ENCODE measurements at regions of chr10 and their contacts with region 1.

Region 1: DNA sequence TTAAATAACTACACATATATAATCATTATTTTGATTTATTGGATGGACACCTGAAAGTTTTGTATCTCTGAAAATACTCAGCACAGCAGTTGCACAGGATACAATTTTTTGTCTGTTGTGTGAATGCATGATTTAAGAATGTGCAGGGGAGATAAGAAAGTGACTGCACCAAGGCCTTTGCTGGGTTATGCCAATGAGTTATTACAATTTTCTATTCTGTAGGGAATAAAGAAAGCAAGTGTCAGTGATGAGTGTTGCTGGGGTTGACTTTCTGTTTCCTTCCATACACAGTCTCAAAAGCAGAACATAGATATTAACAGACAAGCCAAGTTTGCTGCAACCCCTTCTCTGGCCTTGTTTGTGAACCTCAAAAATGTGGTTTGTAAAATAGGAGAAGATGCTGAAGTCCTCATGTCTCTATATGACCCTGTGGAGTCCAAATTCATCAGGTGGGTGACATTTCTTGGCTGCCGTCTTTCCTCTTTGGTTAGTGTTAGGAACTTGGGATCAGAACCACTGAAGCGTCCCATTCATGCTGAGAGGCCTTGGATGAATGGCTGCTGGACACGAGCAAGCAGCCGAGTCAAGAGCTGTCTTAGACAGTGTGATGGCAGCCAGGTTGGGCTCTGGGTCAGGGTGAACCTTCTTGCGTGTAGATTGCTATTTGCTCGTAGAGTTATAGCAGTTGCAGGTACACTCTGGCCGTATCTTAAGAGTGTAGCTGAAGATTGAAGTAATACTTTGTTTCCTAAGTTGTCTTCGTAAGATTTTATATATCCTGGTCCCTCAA is 92.8 kb downstream of the DOCK1 start:
- DNase-seq: no peak
- ATAC-seq: no peak
- H3K4me3 ChIP-seq: no peak overlapping the region
- H3K27ac ChIP-seq: no peak overlapping the region
- H3K4me1 ChIP-seq: no peaks in the 10 kb centered on the region
- H3K27me3 ChIP-seq: no peaks in the 10 kb centered on the region
- CTCF ChIP-seq: no peak

Region 2: GRCh38 chr10:126397640-126398382 is 600.2 kb before region 1 on chr10:
- CTCF ChIA-PET with region 1: interaction called, 11 read pairs
- POLR2A ChIA-PET with region 1: no interaction called
- in situ Hi-C with region 1: no loop called
- intact Hi-C with region 1: no loop called
- DNase-seq: peak; percentile 90
- ATAC-seq: peak; percentile 96
- H3K4me3 ChIP-seq: no peak overlapping the region
- H3K27ac ChIP-seq: no peak overlapping the region
- H3K4me1 ChIP-seq: no peaks in the 10 kb centered on the region
- H3K27me3 ChIP-seq: no peaks in the 10 kb centered on the region
- CTCF ChIP-seq: no peak

Region 3: DNA sequence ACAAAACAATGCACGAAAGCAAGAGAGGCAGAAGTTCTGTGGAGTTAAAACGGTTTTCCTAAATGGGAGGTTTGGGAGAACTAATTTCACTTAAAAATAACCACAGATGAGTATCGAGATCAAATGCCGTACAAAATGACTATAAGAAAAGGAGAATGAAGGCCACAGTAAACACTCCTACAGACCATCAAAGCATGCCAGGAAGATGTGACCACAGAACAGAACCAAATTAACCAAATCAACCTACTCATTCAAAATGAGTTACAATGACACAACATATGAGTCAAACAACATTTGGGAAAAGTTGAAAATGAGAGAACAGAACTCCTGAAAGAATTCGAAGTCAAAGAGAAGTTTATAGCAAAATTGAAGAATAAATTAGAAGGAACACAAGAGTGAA is 117.1 kb before region 1 on chr10:
- CTCF ChIA-PET with region 1: no interaction called
- POLR2A ChIA-PET with region 1: no interaction called
- in situ Hi-C with region 1: no loop called
- intact Hi-C with region 1: no loop called
- DNase-seq: no peak
- ATAC-seq: no peak
- H3K4me3 ChIP-seq: no peak overlapping the region
- H3K27ac ChIP-seq: no peak overlapping the region
- H3K4me1 ChIP-seq: no peaks in the 10 kb centered on the region
- H3K27me3 ChIP-seq: peaks cover 13% of the 10 kb centered on the region
- CTCF ChIP-seq: no peak

Region 4: DNA sequence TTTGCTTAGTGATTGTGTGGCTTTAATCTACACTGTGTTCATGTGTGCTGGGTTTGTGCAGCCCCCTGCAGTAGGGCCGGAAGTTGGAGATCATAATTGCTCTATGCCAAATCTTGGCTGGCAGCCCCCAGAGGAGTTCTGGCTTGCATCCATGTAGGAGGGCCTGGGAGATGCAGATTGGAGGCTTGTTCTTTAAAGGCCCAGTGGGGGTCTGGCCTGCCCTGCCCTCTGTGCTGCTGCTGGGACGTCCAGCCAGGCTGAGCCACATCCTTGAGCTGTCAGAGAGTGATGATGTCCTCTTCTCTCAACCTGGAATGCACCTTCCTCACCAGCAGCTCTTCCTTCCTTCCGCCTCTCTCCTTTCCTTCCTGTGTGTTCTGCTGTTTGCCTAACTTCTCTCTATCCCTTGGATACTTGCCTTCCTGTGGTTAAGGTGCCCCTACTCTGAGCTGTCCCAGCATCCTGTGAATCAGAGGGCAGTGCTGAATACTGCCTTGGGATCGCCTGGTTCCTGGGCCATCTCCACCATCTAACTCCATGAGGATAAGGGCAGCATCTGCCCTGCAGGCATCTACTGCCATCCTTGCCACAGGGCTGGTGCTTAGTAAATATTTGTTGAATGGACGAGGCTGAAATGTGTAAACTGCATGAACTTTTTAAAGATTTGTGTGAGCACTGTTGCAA is 62.6 kb before region 1 on chr10:
- CTCF ChIA-PET with region 1: no interaction called
- POLR2A ChIA-PET with region 1: interaction called, 12 read pairs
- in situ Hi-C with region 1: no loop called
- intact Hi-C with region 1: no loop called
- DNase-seq: no peak
- ATAC-seq: peak; percentile 54; the same call in 1 of the 2 replicates
- H3K4me3 ChIP-seq: no peak overlapping the region
- H3K27ac ChIP-seq: no peak overlapping the region
- H3K4me1 ChIP-seq: peaks cover 4% of the 10 kb centered on the region; the same call in 1 of the 2 replicates
- H3K27me3 ChIP-seq: no peaks in the 10 kb centered on the region
- CTCF ChIP-seq: no peak